Right cardiac atrium (tissue), 5 donors: ENCODE measurements at regions of chr17 and their contacts with region 1.

Region 1: DNA sequence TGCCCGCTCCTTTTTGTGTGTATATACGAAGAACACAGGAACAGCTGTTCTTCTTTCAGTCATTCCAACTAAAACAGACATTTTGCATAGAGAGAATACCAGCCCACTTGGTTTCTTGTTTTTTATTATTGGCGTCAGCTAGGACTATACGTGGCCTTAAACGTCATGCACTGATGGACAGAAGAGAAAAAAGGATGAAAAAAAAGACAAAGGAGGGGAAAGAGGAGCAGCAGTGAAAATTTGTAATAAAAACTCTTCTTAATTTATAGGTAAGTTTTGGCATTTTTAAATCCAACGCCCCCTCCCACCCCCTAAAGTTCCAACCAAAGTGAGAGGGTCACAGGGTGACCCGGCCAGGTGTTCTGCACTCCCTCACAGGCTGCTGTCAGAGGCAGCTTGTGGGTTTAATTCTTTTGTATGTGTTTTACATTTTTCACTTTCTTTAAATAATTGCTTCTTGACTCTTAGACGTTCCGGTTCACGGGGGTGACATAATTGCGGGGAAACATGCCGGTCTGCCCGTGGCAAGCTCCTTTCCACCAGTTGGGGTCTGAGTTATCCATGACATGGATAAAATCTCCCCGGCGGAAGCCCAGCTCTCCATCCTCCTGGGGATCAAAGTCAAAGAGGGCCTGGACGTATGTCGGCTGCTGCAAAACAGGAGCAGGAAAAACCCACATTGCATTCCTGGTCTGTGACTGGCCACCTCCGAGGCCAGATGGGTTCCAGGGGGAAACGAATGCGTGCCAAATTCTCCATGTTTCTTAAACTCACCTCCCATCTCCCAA is 30.9 kb upstream of the SLC25A19 start:
- DNase-seq: no peak
- ATAC-seq: no peak
- H3K4me3 ChIP-seq: no peak overlapping the region
- H3K27ac ChIP-seq: no peak overlapping the region
- H3K4me1 ChIP-seq: peaks cover 2% of the 10 kb centered on the region
- H3K27me3 ChIP-seq: no peaks in the 10 kb centered on the region

Region 2: GRCh38 chr17:75301502-75302206 is 18.4 kb before region 1 on chr17:
- intact Hi-C with region 1: no loop called
- DNase-seq: no peak
- ATAC-seq: peak in 1 of 2 donors; percentile 42
- H3K4me3 ChIP-seq: no peak overlapping the region
- H3K27ac ChIP-seq: no peak overlapping the region
- H3K4me1 ChIP-seq: no peaks in the 10 kb centered on the region
- H3K27me3 ChIP-seq: no peaks in the 10 kb centered on the region

Region 3: GRCh38 chr17:75405365-75406221 is 85.5 kb after region 1 on chr17 and contains the start of gene GRB2:
- intact Hi-C with region 1: loop called (anchors 2 to 5 kb)
- DNase-seq: peak; percentile 99 to 100 (median 99)
- ATAC-seq: peak; percentile 97 to 99
- H3K4me3 ChIP-seq: peak within 1 kb of the TSS; percentile 98
- H3K27ac ChIP-seq: peak within 1 kb of the TSS; percentile 98
- H3K4me1 ChIP-seq: no peaks in the 10 kb centered on the region
- H3K27me3 ChIP-seq: no peaks in the 10 kb centered on the region
- total RNA-seq, gene GRB2: 104 to 150 (median 123) TPM

Region 4: DNA sequence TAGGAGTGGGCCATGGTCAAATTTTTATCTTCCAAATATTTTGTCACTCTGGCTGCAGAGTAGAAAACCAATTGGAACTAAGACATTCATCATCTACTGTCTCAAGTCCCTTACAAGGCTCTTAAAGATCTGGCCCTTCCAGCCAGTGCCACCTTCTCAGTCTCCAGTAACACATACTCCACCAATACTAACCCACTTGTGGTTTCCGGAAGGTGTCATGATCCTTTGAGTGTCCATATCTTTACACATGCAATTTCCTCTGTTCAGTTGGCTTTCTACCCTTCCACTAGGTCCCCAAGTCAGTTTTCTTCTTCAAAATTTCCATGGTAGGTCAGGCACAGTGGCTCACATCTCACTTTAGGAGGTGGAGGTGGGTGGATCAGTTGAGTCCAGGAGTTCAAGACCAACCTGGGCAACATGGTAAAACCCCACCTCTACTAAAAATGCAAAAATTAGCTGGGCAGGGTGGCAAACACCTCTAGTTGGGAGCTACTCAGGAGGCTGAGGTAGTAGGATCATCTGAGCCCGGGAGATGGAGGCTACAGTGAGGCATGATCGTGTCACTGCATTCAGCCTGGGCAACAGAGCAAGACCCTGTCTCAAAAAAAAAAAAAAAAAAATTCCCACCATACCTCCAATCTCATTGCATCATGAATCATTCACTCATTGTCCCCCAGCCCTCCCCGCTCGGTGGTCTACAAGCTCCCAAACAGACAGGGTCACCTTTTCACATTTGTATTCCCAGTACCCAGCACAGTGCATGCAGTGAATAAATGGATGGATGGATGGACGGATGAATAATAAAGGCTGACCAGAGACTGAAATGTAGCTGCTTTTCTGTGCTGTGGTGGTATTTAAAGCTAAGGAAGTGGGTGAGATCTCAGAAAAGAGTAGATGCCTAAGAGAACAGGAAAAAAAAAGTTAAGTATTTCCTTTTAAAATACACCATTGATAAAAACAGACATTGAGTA is 91.5 kb after region 1 on chr17:
- intact Hi-C with region 1: loop called in 2 of 4 experiments (anchors 2 to 5 kb)
- DNase-seq: no peak
- ATAC-seq: no peak
- H3K4me3 ChIP-seq: no peak overlapping the region
- H3K27ac ChIP-seq: no peak overlapping the region
- H3K4me1 ChIP-seq: peaks cover 1% of the 10 kb centered on the region
- H3K27me3 ChIP-seq: no peaks in the 10 kb centered on the region

Region 5: DNA sequence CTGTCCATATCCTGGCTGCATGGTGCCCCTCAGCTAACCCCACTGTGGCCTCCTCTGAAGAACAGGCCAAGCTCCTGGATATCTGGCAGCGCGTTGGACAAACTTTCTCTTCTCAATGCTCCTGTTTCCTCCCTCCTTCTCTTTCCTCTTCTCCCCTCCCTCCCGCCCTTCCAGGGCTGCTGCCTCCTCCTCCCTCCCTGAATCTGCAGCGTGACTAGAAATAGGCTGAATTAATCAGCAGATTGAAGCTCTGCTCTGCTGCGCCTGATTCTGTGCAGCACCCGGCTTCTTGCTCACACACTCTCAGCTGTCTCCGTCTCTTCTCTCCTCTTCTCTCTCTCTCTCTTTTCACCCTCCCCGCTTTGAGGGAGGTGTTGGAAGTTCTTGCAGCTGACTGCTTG is 156.2 kb after region 1 on chr17:
- intact Hi-C with region 1: no loop called
- DNase-seq: peak in 2 of 3 donors; percentile 69 to 73
- ATAC-seq: peak; percentile 71 to 72
- H3K4me3 ChIP-seq: no peak overlapping the region
- H3K27ac ChIP-seq: peak overlapping the region; percentile 63
- H3K4me1 ChIP-seq: peaks cover 16% of the 10 kb centered on the region
- H3K27me3 ChIP-seq: no peaks in the 10 kb centered on the region

Region 6: DNA sequence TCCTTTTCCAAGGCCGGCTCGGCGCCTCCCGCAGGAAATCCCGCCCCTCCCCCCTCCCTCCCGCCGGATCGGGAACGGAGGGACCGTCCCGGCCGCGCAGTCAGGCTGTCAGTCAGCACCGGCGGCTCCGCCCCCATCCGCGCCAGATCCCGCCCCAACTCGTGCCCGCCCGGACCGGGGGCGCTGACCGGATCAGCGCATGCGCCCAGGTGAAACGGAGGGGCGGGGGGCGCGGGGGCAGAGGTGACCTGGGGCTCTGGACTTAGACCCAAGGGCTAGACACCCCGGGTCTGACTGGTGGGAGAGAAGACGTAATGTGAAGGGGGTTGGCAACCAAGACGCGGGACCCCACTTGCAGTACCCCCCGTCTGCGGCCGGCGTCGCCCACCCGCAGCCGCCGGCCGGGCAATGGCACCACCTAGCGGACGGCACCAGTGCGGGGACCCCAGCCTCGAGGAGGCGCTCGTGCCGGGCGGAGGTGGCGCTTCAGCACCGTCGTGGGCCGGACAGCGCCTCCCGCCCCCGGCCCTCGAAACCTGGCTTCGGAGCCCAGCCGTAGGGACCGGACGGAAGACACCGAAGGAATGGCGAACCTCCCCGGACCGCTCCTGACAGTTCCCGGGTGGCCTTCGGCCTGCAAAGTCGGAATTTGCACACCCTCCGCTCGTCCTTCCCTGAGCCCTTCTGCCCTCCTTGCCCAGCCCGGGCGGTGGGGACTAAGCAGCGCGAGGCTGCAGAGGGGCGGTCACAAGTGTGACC is 195.6 kb after region 1 on chr17 and contains the start of gene CASKIN2:
- intact Hi-C with region 1: no loop called
- DNase-seq: peak; percentile 97 to 99 (median 99)
- ATAC-seq: peak; percentile 91 to 94
- H3K4me3 ChIP-seq: peak within 1 kb of the TSS; percentile 73
- H3K27ac ChIP-seq: peak within 1 kb of the TSS; percentile 76
- H3K4me1 ChIP-seq: peaks cover 11% of the 10 kb centered on the region
- H3K27me3 ChIP-seq: no peaks in the 10 kb centered on the region
- total RNA-seq, gene CASKIN2: 38.0 to 50.4 (median 46.4) TPM